SK-N-SH (cell line): ENCODE measurements at regions of chr5 and their contacts with region 1.

Region 1: GRCh38 chr5:168076561-168076991 is 214.9 kb upstream of the WWC1 start:
- DNase-seq: peak; percentile 54
- H3K4me3 ChIP-seq: peak overlapping the region in 1 of 2 experiments; percentile 31; a peak in 1 of 4 replicates
- H3K27ac ChIP-seq: no peak overlapping the region
- H3K4me1 ChIP-seq: peaks cover 0 to 4% of the 10 kb centered on the region in 2 experiments; a peak in 2 of 4 replicates
- H3K27me3 ChIP-seq: no peaks in the 10 kb centered on the region
- CTCF ChIP-seq: peak; percentile 61
- EP300 ChIP-seq: no peak
- RAD21 ChIP-seq: peak; percentile 63

Region 2: DNA sequence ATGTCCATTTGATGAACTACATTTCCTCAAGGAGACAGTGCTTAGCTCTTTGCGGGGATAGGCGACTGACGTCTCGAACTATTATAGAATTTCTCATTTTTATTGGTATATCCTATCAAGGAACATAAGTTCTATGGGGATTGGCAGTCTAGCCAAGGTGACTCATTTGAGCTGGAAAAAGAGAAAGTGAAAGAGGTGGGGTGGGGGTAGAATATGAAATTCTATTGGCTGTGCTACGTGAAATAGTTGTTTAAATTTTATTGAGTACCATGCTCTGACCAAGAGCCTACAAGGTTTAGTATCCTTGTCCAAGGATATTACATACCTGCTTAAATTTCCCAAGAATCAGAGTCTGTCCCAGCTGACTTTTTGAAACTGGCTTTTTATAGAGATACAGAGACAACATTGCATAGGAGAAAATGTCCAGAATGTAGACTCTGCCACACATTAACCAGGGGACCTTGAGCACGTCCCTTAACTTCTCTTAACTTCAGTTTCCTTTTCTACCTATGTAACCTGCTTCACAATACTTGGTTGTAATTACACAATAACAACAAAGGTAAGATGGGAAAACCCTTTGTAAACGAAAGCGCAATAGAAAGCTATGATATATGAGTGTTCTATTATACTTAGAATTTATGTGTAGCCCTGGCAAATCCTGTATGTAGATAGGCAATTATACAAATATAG is 11.5 kb before region 1 on chr5:
- CTCF ChIA-PET with region 1: interaction called, 10 read pairs
- POLR2A ChIA-PET with region 1: no interaction called
- DNase-seq: no peak
- H3K4me3 ChIP-seq: no peak overlapping the region
- H3K27ac ChIP-seq: no peak overlapping the region
- H3K4me1 ChIP-seq: peaks cover 0 to 4% of the 10 kb centered on the region in 2 experiments; a peak in 3 of 4 replicates
- H3K27me3 ChIP-seq: no peaks in the 10 kb centered on the region
- CTCF ChIP-seq: no peak
- EP300 ChIP-seq: no peak
- RAD21 ChIP-seq: no peak